Astrocyte of the cerebellum (primary cell): ENCODE measurements at regions of chr5 and their contacts with region 1.

Region 1: DNA sequence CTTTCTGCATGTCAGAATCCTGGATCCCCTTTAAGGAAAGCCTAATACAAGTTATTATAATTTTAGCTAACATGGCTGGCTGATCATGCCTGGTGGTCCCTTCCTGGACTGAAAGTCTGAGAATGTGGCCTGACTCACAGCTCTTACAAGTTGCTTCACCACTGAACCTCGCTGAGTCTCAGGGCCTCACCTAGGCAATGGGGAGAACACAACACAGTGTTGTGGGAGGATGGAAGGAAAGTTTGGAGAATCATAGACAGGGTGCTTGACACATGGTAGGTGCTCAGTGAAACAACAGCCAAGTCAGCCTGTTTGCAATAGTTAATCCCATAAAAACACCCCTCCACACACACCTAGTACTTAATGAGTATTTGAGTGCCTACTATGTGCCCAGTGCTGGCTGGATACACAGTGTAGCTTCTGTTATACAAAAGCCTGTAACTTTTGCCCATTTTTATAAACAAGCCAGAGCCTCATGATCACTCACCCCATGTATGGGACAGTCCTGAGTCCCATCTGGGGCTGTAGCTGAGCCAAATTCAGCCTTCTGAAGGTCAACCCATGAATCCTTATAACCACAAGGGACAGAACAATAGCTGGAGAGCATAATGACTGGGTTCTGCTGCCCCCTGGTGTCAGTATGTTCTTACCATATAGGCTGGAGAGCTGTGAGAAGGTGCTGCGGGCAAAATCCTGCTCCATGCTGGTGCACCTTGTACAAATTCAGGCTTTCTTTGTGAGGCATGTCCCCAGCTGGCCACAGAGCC is 3.9 kb downstream of the ACSL6 start:
- DNase-seq: peak; percentile 65
- H3K4me3 ChIP-seq: no peak overlapping the region
- CTCF ChIP-seq: peak; percentile 77

Region 2: DNA sequence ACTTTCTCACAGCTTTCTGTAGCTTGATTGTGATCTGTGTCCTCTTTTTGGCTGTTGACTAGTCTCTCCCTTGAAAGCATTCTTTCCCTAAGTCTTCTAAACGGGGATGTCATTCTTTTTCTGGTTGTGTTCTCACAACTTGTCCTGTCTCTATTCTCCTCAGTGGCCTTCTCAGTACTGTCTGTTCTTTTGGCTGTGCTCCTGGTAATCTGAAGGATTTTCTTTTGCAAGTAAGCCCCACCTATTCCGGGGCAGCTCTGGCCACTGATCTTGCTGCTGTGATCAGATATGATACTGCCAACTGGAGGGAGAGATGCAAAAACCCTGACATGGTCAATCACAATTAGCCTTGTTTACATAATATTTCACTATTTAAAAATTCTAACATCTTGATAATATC is 571.5 kb before region 1 on chr5:
- in situ Hi-C with region 1: loop called (anchors 25 kb)
- DNase-seq: no peak
- H3K4me3 ChIP-seq: no peak overlapping the region
- CTCF ChIP-seq: no peak

Region 3: GRCh38 chr5:131589510-131590348 is 417.9 kb before region 1 on chr5:
- in situ Hi-C with region 1: loop called (anchors 25 kb)
- DNase-seq: peak; percentile 49
- H3K4me3 ChIP-seq: no peak overlapping the region
- CTCF ChIP-seq: peak; percentile 86

Region 4: DNA sequence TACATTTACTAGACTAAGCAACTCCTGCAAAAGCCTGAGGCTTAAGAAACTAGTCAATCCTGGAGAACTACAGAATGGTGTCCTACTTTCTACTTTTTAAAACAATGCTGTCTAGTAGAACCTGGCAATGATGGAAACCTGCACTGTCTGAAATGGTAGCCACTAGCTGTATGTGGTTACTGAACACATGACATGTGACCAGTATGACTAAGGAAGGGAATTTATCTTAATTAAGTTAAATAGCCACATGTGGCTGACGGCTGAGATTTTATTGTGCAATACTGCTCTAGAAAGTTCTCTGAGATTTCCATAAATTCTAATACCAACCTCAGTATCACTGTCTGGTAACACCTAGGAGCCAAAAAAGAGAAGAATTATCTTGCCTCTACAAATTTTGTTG is 327.7 kb before region 1 on chr5:
- in situ Hi-C with region 1: loop called (anchors 25 kb)
- DNase-seq: peak; percentile 63
- H3K4me3 ChIP-seq: no peak overlapping the region
- CTCF ChIP-seq: no peak

Region 5: GRCh38 chr5:131968396-131968954 is 39.1 kb before region 1 on chr5:
- in situ Hi-C with region 1: no loop called
- DNase-seq: peak; percentile 79
- H3K4me3 ChIP-seq: no peak overlapping the region
- CTCF ChIP-seq: no peak

Region 6: GRCh38 chr5:132103332-132103951 is 95.9 kb after region 1 on chr5:
- in situ Hi-C with region 1: no loop called
- DNase-seq: peak; percentile 82
- H3K4me3 ChIP-seq: no peak overlapping the region
- CTCF ChIP-seq: no peak